Activated B cell treated with CpG ODN at 0.5 μM for 24 hours (primary cell): ENCODE measurements at regions of chr9 and their contacts with region 1.

Region 1: DNA sequence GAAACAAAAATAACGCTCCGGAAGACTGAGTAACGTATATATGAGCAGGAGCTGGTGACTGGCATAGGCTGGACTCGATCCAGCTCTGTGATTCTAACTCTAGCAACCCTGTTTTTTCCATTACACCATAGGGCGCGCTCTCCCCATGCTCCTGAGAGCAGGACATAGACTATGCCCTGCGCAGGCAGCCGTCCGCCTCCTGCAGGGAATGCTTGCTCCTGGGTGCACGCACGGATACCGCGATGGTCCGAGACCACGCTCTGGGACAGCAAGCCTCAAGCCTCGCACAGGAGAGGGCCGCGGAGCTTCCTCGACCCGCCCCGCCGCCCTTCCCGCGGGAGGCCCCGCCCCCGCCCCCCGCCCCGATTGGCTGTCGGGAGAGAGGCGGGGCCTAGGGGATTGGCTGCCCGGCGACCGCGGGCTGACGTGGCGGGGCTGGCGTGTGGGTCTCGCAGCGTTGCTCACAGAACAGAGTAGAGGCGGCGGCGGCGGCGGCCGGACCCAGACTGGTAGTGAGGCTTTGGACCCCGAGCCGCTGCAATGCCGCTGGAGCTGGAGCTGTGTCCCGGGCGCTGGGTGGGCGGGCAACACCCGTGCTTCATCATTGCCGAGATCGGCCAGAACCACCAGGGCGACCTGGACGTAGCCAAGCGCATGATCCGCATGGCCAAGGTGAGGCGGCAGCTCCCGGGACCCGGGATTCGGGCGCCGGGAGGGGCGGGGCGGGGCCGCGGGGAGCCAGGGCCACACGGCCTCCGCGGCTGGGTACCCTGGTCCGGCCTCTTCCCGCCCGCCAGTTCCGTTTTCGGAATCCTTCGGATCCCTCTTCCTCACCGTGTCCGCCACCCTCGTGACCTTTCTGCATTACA is at the start of gene NANS:
- DNase-seq: peak; percentile 87
- ATAC-seq: peak; percentile 97
- H3K4me3 Mint-ChIP-seq: peak within 1 kb of the TSS; percentile 97
- H3K27ac Mint-ChIP-seq: peak within 1 kb of the TSS; percentile 94
- H3K4me1 Mint-ChIP-seq: peaks cover 14% of the 10 kb centered on the region
- H3K27me3 Mint-ChIP-seq: no peaks in the 10 kb centered on the region
- CTCF ChIP-seq: no peak
- total RNA-seq, gene NANS: 21.6 and 21.8 TPM in 2 replicates

Region 2: GRCh38 chr9:97696803-97697601 is 359.5 kb before region 1 on chr9 and contains the start of gene XPA:
- CTCF ChIA-PET with region 1: no interaction called
- POLR2A ChIA-PET with region 1: no interaction called
- intact Hi-C with region 1: loop called (anchors 5 kb)
- DNase-seq: peak; percentile 96
- ATAC-seq: peak; percentile 93
- H3K4me3 Mint-ChIP-seq: peak within 1 kb of the TSS; percentile 90
- H3K27ac Mint-ChIP-seq: peak within 1 kb of the TSS; percentile 94
- H3K4me1 Mint-ChIP-seq: peaks cover 60% of the 10 kb centered on the region
- H3K27me3 Mint-ChIP-seq: peaks cover 5% of the 10 kb centered on the region
- CTCF ChIP-seq: no peak
- total RNA-seq, gene XPA: 14.4 and 18.1 TPM in 2 replicates

Region 3: GRCh38 chr9:98010445-98010844 is 46.1 kb before region 1 on chr9:
- CTCF ChIA-PET with region 1: no interaction called
- POLR2A ChIA-PET with region 1: no interaction called
- intact Hi-C with region 1: loop called (anchors 1 kb)
- DNase-seq: no peak
- ATAC-seq: peak; percentile 96
- H3K4me3 Mint-ChIP-seq: no peak overlapping the region
- H3K27ac Mint-ChIP-seq: peak overlapping the region; percentile 24
- H3K4me1 Mint-ChIP-seq: peaks cover 21% of the 10 kb centered on the region
- H3K27me3 Mint-ChIP-seq: no peaks in the 10 kb centered on the region
- CTCF ChIP-seq: no peak

Region 4: DNA sequence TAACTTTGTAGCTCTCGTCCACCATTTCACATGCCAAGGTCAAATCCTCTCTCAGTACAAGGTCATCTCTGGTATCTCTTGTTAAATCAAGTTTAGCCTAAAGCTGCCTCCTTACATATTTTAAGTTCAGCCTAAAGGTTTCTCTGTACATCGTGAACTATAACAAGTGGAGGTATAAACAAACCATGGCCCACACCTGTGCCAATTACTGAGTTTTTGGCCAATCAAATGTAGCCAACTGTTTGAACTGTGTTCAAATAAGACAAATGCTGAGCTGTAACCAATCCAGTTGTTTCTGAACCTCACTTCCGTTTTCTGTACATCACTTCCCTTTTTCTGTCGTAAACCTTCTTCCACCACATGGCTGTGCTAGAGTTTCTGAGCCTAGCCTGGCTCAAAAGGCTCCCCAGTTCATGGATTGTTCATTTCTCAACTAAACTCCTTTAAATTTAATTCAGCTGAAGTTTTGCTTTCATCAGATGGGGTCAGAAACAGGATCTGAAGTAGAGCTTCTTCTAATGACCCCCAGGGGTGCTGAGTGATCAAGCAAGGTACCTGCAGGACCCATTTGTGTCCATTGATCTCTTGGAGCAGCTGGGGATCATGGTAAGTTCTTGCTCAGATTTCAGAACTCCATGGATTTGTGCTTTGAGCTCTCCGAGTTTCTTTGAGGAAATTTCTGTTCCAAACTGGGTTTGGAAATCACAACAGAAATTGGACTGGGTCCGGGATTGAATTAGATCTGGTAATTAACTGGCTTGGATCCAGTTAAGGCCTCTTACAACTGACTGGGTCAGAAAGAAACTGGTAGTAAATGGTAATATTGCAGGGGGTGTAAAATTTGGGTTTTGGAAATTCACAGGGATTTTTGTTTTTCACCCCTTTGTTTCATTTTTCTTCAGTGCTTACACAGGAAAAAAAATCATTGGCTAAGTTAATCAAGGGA is 11.0 kb before region 1 on chr9:
- CTCF ChIA-PET with region 1: interaction called, 4 read pairs
- POLR2A ChIA-PET with region 1: interaction called, 38 read pairs
- intact Hi-C with region 1: loop called (anchors 1 kb)
- DNase-seq: no peak
- ATAC-seq: peak; percentile 87
- H3K4me3 Mint-ChIP-seq: peak overlapping the region; percentile 83
- H3K27ac Mint-ChIP-seq: peak overlapping the region; percentile 84
- H3K4me1 Mint-ChIP-seq: peaks cover 53% of the 10 kb centered on the region
- H3K27me3 Mint-ChIP-seq: peaks cover under 1% of the 10 kb centered on the region
- CTCF ChIP-seq: no peak

Region 5: GRCh38 chr9:98101868-98102273 is 45.4 kb after region 1 on chr9:
- CTCF ChIA-PET with region 1: no interaction called
- POLR2A ChIA-PET with region 1: interaction called, 10 read pairs
- intact Hi-C with region 1: loop called (anchors 2 kb)
- DNase-seq: peak; percentile 32
- ATAC-seq: peak; percentile 95
- H3K4me3 Mint-ChIP-seq: peak overlapping the region; percentile 42
- H3K27ac Mint-ChIP-seq: peak overlapping the region; percentile 84
- H3K4me1 Mint-ChIP-seq: peaks cover 87% of the 10 kb centered on the region
- H3K27me3 Mint-ChIP-seq: no peaks in the 10 kb centered on the region
- CTCF ChIP-seq: no peak

Region 6: GRCh38 chr9:98255578-98256296 is 199.2 kb after region 1 on chr9 and contains the start of gene TBC1D2:
- CTCF ChIA-PET with region 1: no interaction called
- POLR2A ChIA-PET with region 1: interaction called, 39 read pairs
- intact Hi-C with region 1: loop called (anchors 1 kb)
- DNase-seq: peak; percentile 98
- ATAC-seq: peak; percentile 90
- H3K4me3 Mint-ChIP-seq: peak within 1 kb of the TSS; percentile 98
- H3K27ac Mint-ChIP-seq: peak within 1 kb of the TSS; percentile 99
- H3K4me1 Mint-ChIP-seq: peaks cover 13% of the 10 kb centered on the region
- H3K27me3 Mint-ChIP-seq: no peaks in the 10 kb centered on the region
- CTCF ChIP-seq: no peak
- total RNA-seq, gene TBC1D2: 2.1 and 2.7 TPM in 2 replicates

Region 7: DNA sequence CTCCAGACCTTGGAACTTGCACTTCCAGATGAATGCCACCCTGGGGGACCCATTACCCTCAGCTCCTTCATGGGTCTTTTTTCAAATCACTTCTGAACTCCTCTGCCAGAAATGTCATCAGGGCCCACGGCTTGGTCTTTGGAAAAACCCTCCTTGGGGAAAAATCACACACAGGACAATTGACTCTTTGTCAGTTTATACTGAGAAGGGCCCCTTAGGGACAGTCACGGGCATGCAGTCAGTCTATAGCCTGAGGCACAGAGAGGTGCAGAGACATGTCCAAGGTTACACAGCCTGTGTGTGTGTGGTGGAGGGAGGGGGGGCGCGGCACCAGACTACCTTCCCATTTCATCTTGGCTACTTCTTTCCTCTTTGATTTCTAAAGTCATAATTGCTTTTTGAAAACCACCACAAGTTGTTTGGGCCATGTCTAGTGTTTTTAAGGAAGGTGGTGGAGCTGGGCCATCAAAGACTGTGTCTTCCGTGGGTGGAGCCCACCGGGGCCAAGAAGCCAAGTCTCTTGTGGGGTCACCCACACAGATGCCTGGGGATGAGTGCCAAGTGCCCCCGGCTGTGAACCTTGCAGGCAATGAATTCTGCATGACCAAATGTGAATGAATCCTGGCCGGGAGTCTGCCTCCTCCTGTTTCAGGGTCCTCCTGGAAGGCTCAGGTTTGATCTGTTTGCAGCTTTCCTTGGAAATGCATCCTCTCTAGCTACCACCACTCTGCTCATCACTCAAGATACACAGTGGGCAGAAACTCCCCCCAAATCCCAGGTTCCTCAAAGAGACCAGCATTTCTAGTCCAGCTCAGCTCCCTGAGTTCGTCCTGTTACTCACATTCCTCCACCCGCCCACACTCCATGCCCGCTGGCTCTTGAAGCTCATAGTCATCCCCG is 399.0 kb after region 1 on chr9:
- CTCF ChIA-PET with region 1: no interaction called
- POLR2A ChIA-PET with region 1: no interaction called
- intact Hi-C with region 1: no loop called
- DNase-seq: no peak
- ATAC-seq: no peak
- H3K4me3 Mint-ChIP-seq: no peak overlapping the region
- H3K27ac Mint-ChIP-seq: no peak overlapping the region
- H3K4me1 Mint-ChIP-seq: no peaks in the 10 kb centered on the region
- H3K27me3 Mint-ChIP-seq: peaks cover 18% of the 10 kb centered on the region
- CTCF ChIP-seq: no peak

Region 8: GRCh38 chr9:99307851-99308250 is 1251.3 kb after region 1 on chr9:
- CTCF ChIA-PET with region 1: no interaction called
- POLR2A ChIA-PET with region 1: no interaction called
- intact Hi-C with region 1: no loop called
- DNase-seq: no peak
- ATAC-seq: no peak
- H3K4me3 Mint-ChIP-seq: no peak overlapping the region
- H3K27ac Mint-ChIP-seq: no peak overlapping the region
- H3K4me1 Mint-ChIP-seq: no peaks in the 10 kb centered on the region
- H3K27me3 Mint-ChIP-seq: no peaks in the 10 kb centered on the region
- CTCF ChIP-seq: no peak